SK-N-SH (cell line): ENCODE measurements at regions of chr1 and their contacts with region 1.

Region 1: GRCh38 chr1:4652631-4653327 is 1.6 kb upstream of the AJAP1 start:
- DNase-seq: peak; percentile 92
- H3K4me3 ChIP-seq: no peak overlapping the region
- H3K27ac ChIP-seq: no peak overlapping the region
- H3K4me1 ChIP-seq: peaks cover 0 to 9% of the 10 kb centered on the region in 2 experiments; a peak in 1 of 4 replicates
- H3K27me3 ChIP-seq: no peaks in the 10 kb centered on the region
- CTCF ChIP-seq: peak; percentile 67
- EP300 ChIP-seq: no peak
- RAD21 ChIP-seq: peak; percentile 59

Region 2: GRCh38 chr1:4612991-4613390 is 39.8 kb before region 1 on chr1:
- CTCF ChIA-PET with region 1: interaction called, 11 read pairs
- POLR2A ChIA-PET with region 1: no interaction called
- DNase-seq: peak; percentile 58
- H3K4me3 ChIP-seq: no peak overlapping the region
- H3K27ac ChIP-seq: peak overlapping the region in 1 of 2 experiments; percentile 86; a peak in 2 of 4 replicates
- H3K4me1 ChIP-seq: peaks cover 0 to 40% of the 10 kb centered on the region in 2 experiments; a peak in 1 of 4 replicates
- H3K27me3 ChIP-seq: no peaks in the 10 kb centered on the region
- CTCF ChIP-seq: no peak
- EP300 ChIP-seq: no peak
- RAD21 ChIP-seq: no peak

Region 3: DNA sequence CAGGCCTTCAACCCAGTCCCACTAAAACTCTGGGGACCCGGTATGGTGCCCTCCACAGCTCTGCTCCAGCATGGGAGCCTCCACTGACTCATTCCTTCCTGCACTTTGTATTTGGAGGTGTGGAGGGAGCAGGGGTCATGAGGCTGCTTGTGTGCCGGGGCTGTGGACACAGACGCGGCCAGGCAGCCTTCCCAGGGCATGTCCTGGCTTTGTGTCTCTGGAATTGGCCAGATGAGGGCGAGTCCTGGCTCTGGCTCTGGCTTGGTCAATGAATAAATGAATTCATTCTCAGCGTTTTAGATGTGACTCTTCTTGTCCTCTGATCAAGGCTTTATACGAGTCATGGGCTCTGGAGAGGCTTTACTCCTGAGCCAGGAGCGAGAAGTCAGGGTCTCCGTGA is 20.7 kb after region 1 on chr1:
- CTCF ChIA-PET with region 1: interaction called, 31 read pairs
- POLR2A ChIA-PET with region 1: no interaction called
- DNase-seq: no peak
- H3K4me3 ChIP-seq: no peak overlapping the region
- H3K27ac ChIP-seq: no peak overlapping the region
- H3K4me1 ChIP-seq: no peaks in the 10 kb centered on the region; a peak in 1 of 4 replicates
- H3K27me3 ChIP-seq: no peaks in the 10 kb centered on the region
- CTCF ChIP-seq: no peak
- EP300 ChIP-seq: no peak
- RAD21 ChIP-seq: no peak

Region 4: GRCh38 chr1:4778056-4778455 is 125.3 kb after region 1 on chr1:
- CTCF ChIA-PET with region 1: interaction called, 70 read pairs
- POLR2A ChIA-PET with region 1: no interaction called
- DNase-seq: peak; percentile 69
- H3K4me3 ChIP-seq: no peak overlapping the region
- H3K27ac ChIP-seq: no peak overlapping the region
- H3K4me1 ChIP-seq: peaks cover 0 to 23% of the 10 kb centered on the region in 2 experiments; a peak in 1 of 4 replicates
- H3K27me3 ChIP-seq: no peaks in the 10 kb centered on the region
- CTCF ChIP-seq: no peak
- EP300 ChIP-seq: no peak
- RAD21 ChIP-seq: peak; percentile 56; the same call in 1 of the 2 replicates

Region 5: DNA sequence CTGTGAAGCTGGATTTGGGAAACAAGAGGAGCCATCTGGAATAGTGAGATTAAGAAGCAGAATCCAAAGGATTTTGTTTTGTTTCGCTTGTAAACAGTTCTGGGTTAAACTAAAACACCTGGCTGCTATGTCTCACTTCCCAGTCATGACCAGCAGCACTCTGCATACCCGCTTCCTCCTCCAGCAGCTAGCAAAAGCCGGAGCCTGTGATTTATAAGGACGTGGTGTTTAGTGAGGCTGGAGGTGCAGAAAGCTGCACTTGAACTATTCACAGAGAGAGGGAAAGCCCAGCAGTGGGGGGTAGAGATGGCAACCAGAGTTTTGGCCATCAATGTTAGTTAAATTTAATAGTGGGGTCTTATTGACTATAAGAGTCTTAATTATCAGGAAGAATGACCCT is 241.8 kb after region 1 on chr1:
- CTCF ChIA-PET with region 1: no interaction called
- POLR2A ChIA-PET with region 1: no interaction called
- DNase-seq: no peak
- H3K4me3 ChIP-seq: no peak overlapping the region
- H3K27ac ChIP-seq: no peak overlapping the region
- H3K4me1 ChIP-seq: no peaks in the 10 kb centered on the region
- H3K27me3 ChIP-seq: no peaks in the 10 kb centered on the region
- CTCF ChIP-seq: no peak
- EP300 ChIP-seq: no peak
- RAD21 ChIP-seq: no peak

Region 6: GRCh38 chr1:5514519-5515183 is 861.9 kb after region 1 on chr1:
- CTCF ChIA-PET with region 1: interaction called, 21 read pairs
- POLR2A ChIA-PET with region 1: no interaction called
- DNase-seq: peak; percentile 89
- H3K4me3 ChIP-seq: no peak overlapping the region; a peak in 1 of 4 replicates
- H3K27ac ChIP-seq: no peak overlapping the region
- H3K4me1 ChIP-seq: peaks cover 0 to 19% of the 10 kb centered on the region in 2 experiments; a peak in 1 of 4 replicates
- H3K27me3 ChIP-seq: no peaks in the 10 kb centered on the region
- CTCF ChIP-seq: peak; percentile 83
- EP300 ChIP-seq: no peak
- RAD21 ChIP-seq: peak; percentile 69

Region 7: GRCh38 chr1:5751833-5752745 is 1099.3 kb after region 1 on chr1:
- CTCF ChIA-PET with region 1: interaction called, 61 read pairs
- POLR2A ChIA-PET with region 1: no interaction called
- DNase-seq: no peak
- H3K4me3 ChIP-seq: no peak overlapping the region
- H3K27ac ChIP-seq: no peak overlapping the region
- H3K4me1 ChIP-seq: peaks cover 0 to 11% of the 10 kb centered on the region in 2 experiments; a peak in 1 of 4 replicates
- H3K27me3 ChIP-seq: no peaks in the 10 kb centered on the region
- CTCF ChIP-seq: no peak
- EP300 ChIP-seq: no peak
- RAD21 ChIP-seq: peak; percentile 32